Astrocyte of the cerebellum (primary cell): ENCODE measurements at regions of chr5 and their contacts with region 1.

Region 1: GRCh38 chr5:120516805-120517204 is 52.7 kb downstream of the PRR16 start:
- DNase-seq: peak; percentile 94
- H3K4me3 ChIP-seq: no peak overlapping the region
- CTCF ChIP-seq: no peak

Region 2: DNA sequence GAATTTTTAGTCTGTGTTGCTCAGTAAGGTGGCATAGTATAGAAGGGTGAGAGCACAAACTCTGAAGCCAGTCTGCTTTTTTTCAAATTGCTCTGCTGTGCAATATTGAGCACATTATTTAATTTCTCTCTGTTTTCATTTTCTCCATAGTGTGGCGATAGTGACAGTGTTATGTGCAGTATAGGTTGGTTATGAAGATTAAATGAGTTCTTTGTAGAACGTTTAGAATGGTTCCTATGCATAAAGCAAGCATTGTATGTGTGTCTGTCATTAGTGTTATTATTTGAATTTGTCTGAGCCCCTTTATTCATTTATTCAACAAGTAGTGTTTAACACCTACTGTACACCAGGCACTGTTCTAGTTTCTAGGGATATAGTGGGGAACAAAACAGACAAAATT is 43.5 kb before region 1 on chr5:
- in situ Hi-C with region 1: loop called (anchors 5 kb)
- DNase-seq: no peak
- H3K4me3 ChIP-seq: no peak overlapping the region
- CTCF ChIP-seq: no peak

Region 3: DNA sequence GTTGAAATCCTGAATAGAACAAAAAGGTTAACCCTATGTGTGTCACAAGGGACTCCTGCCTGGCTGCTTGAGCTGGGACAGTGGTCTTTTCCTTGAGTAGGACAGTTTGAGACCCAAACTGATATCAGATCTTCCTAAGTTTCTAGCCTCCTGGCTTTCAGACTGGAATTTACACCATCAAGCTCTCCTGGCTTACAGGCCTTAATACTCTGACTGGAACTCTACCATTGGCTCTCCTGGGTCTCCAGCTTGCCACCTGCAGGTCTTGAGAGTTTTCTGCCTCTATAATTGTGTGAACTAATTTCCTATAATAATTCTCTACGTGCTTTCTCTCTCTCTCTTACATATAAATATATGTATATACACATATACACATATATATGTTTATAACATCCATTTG is 59.8 kb after region 1 on chr5:
- in situ Hi-C with region 1: no loop called
- DNase-seq: no peak
- H3K4me3 ChIP-seq: no peak overlapping the region
- CTCF ChIP-seq: no peak

Region 4: DNA sequence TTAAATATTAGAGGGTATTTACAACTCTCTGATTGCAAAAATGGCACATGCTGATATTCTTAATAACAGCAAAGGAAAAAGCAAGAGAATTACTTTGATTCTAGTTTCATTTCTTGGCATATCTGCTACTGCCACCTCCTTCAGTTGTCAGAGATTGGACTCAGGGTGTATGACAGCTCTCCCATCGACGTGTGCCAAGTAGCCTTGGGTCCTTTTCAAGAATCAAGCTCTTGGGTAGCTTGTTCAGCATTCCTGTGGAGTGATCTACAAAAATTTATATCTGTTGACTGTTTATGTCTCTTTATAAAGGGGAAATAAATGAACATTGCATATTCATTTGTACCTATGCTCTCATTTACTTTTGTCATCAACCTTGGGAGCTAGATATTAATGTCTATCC is 262.9 kb after region 1 on chr5:
- in situ Hi-C with region 1: no loop called
- DNase-seq: no peak
- H3K4me3 ChIP-seq: no peak overlapping the region
- CTCF ChIP-seq: no peak